ENCODE measurements at regions of chr20 and their contacts with region 1.

Region 1: DNA sequence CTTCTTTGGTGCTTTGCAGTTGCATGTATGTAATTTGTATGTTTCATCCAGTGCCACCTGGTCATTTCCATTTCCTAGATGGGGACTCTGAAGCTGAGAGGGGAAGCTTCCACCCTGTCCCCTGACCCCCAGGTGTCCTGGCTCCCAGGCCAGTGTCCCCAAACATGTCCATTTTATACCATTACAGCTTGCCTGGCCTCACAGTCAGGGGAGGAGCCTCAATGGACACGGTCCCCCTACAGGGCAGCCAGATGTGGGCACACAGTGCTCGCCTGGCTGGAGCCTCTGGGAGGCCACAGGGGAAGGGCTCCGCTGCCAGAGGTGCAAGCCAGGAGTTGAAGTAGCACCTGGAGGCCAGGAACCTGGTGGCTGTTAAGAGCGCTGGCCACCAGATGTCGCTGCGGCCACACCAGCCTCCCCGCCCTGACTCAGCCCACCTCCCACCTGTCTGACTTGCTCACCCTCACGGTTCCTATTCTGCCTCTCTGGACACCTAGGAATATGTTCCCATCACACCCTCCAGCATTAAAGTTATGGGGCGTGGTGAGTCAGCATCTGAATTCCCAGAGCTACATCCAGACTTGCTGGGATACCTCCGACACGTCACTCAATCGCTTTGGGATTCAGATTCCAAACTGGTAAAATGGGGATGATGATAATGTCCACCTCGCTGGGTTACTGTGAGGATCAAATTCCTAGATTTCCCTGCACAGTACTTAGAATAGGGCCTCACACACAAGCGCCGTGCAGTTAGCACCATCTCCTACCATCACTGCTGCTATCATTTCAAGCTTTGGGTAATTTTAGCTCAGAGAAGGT is 107.4 kb downstream of the SULF2 start:
- DNase-seq: peak; percentile 83
- ATAC-seq: peak; percentile 91
- H3K4me3 Mint-ChIP-seq: no peak overlapping the region
- H3K27ac Mint-ChIP-seq: no peak overlapping the region
- H3K4me1 Mint-ChIP-seq: no peaks in the 10 kb centered on the region
- H3K27me3 Mint-ChIP-seq: no peaks in the 10 kb centered on the region

Region 2: DNA sequence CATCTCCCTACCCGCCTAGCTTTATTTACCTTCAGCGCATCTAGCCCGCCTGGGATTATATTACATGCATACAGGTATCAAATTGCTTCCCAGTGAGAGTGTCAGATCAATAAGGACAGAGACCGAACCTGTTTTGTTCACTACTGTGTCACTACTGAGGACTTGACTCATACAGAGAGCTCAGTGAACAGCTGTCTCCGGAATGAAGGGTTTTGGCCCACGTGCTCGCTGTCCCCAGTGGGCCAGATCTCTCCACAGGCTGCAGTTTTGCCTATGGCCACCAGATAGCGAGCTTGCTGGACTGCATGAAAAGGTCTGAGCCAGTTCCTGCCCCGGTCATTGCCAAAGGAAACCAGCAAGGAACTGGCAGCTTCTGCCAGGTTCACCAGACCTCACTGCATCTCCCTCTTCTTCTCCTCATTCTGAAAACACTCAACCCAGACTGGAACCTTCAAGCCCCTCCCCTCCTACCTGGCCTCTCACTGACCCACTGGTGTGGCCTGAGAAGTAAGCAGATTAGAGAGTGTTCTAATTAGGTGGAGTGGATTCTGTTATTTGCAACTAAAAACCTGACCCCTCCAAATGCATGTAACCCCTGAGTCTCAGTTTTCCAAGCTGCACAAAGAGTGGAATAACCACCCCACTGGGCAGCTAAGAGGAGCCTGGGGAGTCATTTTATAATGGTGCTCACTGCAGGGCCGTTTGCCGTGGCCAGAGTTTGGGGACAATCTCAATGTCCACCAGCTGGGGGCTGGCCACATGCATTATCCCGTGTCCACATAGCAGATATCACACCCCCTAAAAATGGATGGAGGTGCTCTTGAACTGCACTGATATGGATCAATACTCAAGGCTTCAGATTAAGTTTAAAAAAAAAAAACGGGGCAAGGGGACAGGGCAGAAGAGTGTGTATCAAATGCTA is 472.0 kb before region 1 on chr20:
- CTCF ChIA-PET with region 1: no interaction called
- POLR2A ChIA-PET with region 1: no interaction called
- intact Hi-C with region 1: no loop called
- DNase-seq: peak; percentile 82
- ATAC-seq: peak; percentile 88
- H3K4me3 Mint-ChIP-seq: no peak overlapping the region
- H3K27ac Mint-ChIP-seq: no peak overlapping the region
- H3K4me1 Mint-ChIP-seq: peaks cover 6% of the 10 kb centered on the region
- H3K27me3 Mint-ChIP-seq: no peaks in the 10 kb centered on the region

Region 3: DNA sequence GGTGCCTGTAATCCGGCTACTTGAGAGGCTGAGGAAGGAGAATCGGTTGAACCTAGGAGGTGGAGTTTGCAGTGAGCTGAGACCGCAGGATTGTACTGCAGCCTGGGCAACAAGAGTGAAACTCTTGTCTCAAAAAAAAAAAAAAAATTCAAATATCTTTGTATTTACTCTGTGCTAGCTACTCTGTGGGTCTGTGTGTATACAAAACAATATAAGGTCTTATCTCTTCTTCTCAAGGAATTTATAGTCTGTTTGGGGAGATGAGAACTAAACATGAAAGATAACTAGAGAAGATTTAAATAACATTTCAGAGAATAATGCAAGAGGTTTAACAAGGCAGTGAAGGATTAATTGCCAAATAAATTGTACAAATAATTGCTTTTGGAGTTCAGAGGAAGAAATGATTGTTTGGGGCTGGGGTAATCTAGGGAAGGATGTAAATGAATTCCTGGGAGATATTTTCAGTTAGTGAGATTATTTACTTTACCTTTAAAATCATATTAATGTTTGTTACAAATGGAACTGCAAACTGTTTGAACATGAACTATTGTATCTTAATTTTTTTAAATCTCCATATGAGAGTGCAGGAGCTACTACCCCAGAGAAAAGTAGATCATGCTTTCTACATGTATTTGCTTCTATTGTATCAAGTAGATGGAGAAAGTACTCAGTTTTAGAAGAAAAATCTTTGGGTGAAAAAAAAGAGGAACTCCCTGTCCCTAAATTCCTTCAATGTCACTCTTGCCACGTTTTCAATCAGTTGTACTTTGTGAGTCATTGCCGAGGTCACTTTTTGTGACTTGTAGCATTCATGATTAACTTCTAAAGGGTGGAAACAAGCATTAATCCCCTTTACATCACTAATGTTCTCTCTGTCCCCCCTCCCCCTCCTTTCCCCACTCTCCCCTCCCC is 137.1 kb before region 1 on chr20:
- CTCF ChIA-PET with region 1: no interaction called
- POLR2A ChIA-PET with region 1: no interaction called
- intact Hi-C with region 1: no loop called
- DNase-seq: no peak
- ATAC-seq: peak; percentile 61
- H3K4me3 Mint-ChIP-seq: no peak overlapping the region
- H3K27ac Mint-ChIP-seq: peak overlapping the region; percentile 66
- H3K4me1 Mint-ChIP-seq: peaks cover 78% of the 10 kb centered on the region
- H3K27me3 Mint-ChIP-seq: no peaks in the 10 kb centered on the region

Region 4: GRCh38 chr20:47610247-47610944 is 67.4 kb before region 1 on chr20:
- CTCF ChIA-PET with region 1: no interaction called
- POLR2A ChIA-PET with region 1: no interaction called
- intact Hi-C with region 1: no loop called
- DNase-seq: peak; percentile 93
- ATAC-seq: peak; percentile 90
- H3K4me3 Mint-ChIP-seq: peak overlapping the region; percentile 46
- H3K27ac Mint-ChIP-seq: peak overlapping the region; percentile 90
- H3K4me1 Mint-ChIP-seq: peaks cover 82% of the 10 kb centered on the region
- H3K27me3 Mint-ChIP-seq: no peaks in the 10 kb centered on the region

Region 5: DNA sequence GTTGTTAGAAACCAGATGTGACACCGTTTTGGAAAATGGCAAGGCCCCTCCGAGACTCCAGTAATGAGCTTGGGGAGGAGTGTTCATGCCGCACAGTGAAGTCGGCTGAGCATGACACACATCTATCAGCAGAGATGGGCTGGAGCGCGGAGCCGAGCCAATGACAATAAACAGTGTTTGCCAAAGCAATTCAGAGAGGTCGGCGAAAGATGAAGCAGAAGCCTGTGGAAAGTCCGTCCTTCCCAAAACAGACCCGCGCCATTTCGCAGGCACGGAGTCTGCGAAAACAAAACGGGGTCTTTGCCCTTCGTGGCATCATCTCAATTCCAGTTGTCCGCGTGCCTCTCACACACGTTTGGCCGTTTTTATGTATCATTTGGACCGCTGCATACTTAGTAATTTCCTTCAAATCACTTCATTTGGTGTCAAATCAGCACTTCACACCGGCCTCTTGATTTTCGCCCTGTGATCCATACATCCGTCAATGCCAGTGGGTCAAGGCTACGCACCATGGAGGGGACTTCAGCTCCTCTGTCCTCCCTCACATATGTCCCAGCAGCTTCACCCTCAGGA is 36.1 kb after region 1 on chr20:
- CTCF ChIA-PET with region 1: interaction called, 5 read pairs
- POLR2A ChIA-PET with region 1: no interaction called
- intact Hi-C with region 1: loop called (anchors 1 to 5 kb)
- DNase-seq: no peak
- ATAC-seq: no peak
- H3K4me3 Mint-ChIP-seq: no peak overlapping the region
- H3K27ac Mint-ChIP-seq: no peak overlapping the region
- H3K4me1 Mint-ChIP-seq: no peaks in the 10 kb centered on the region
- H3K27me3 Mint-ChIP-seq: peaks cover 7% of the 10 kb centered on the region

Region 6: DNA sequence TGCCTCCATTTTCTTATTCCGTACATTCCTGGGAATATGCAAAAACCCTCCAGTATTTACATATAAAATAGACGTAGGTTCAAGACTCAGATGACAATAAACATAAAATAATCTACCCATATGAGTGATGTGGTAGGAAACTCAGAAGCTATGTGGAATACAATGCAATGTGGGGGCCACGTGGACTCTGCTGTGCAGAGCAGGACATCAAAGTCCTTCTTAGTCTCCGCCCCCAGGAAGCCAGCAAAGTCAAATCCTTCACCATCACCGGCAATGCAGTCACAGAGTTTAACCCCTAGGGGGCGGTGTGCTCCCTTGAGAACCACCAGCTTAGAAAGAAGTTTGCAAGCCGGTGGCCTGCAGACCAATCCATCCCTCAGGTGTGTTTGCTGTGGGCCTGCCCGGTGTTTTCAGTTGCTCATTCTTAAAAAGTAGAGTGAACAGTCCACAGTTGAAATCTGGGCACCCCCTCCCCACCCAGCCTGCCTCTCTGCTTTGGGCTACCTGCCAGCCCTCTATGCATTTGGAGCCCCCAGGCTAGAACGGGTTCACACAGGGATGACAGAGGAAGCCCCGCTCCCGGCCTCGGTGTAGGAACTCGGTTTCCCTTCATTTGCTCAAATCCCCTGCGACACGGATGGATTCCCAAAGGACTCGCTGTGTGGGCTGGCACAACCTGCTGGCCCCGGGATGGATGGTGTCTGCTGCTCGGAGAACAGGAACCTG is 47.6 kb after region 1 on chr20:
- CTCF ChIA-PET with region 1: interaction called, 6 read pairs
- POLR2A ChIA-PET with region 1: interaction called, 6 read pairs
- intact Hi-C with region 1: loop called in 1 of 2 experiments (anchors 1 kb)
- DNase-seq: peak; percentile 90
- ATAC-seq: peak; percentile 72
- H3K4me3 Mint-ChIP-seq: no peak overlapping the region
- H3K27ac Mint-ChIP-seq: peak overlapping the region; percentile 63
- H3K4me1 Mint-ChIP-seq: peaks cover 29% of the 10 kb centered on the region
- H3K27me3 Mint-ChIP-seq: no peaks in the 10 kb centered on the region

Region 7: GRCh38 chr20:47785854-47786764 is 108.3 kb after region 1 on chr20:
- CTCF ChIA-PET with region 1: interaction called, 4 read pairs
- POLR2A ChIA-PET with region 1: no interaction called
- intact Hi-C with region 1: loop called in 1 of 2 experiments (anchors 10 kb)
- DNase-seq: peak; percentile 36
- ATAC-seq: peak; percentile 42
- H3K4me3 Mint-ChIP-seq: peak overlapping the region; percentile 51
- H3K27ac Mint-ChIP-seq: no peak overlapping the region
- H3K4me1 Mint-ChIP-seq: peaks cover 10% of the 10 kb centered on the region
- H3K27me3 Mint-ChIP-seq: peaks cover 56% of the 10 kb centered on the region

Region 8: DNA sequence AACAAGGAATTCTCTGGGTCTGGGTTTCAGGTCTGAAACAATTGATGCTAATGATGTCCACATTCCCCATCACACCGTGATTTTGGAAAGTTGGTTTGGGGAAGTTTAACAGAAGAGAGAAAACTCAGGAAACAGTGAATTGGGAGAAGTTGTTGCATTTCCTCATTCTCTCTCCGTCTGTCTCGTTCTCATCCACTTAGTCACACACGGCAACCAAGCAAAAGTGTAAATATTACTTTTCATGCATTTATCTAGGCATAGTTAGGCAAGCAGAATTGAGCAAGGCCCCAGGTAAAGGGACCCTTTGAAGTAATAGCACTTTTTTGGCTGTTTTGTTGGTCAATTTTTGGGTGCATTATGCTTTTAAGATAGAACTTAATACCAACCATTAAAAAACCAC is 244.4 kb after region 1 on chr20:
- CTCF ChIA-PET with region 1: no interaction called
- POLR2A ChIA-PET with region 1: no interaction called
- intact Hi-C with region 1: no loop called
- DNase-seq: no peak
- ATAC-seq: no peak
- H3K4me3 Mint-ChIP-seq: no peak overlapping the region
- H3K27ac Mint-ChIP-seq: no peak overlapping the region
- H3K4me1 Mint-ChIP-seq: no peaks in the 10 kb centered on the region
- H3K27me3 Mint-ChIP-seq: peaks cover 27% of the 10 kb centered on the region